ENCODE measurements at regions of chr6 and their contacts with region 1.

Region 1: DNA sequence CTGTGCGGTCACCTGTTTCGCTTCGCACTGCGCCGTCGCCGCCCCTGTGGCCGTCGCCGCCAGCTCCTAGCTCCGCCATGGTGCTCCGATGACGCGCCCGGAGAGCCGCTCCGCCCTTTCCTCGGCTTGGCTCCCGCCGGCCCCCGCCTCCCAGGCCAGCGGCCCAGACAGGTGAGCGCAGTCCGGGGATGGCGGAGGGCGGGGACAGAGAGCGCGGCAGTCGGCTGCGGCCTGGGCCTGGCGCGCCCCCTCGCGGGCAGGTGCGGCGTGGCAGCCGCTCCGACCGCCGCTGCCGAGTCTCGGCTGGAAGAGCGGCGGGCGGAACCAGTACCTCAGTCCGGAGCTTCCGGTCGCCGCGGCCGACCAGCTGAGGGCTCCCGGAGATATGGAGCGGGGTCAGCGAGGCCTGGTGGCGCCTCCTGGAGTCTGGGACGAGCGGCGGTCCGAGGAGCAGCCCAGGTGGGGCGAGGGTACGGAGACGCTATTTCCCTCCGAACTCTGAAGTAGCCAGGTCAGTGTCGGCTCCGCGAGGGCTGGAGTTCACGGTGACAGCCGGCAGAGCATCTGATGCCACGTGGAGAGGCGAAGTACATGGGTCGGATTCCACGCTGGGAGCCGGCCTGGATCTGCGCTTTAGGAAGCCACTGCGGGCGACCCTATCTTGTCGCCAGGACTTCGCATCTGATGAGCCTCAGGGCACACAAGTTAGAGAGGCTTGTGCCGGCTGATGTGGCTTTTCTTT is at the start of gene MAP7:
- DNase-seq: peak; percentile 93
- H3K4me3 ChIP-seq: peak within 1 kb of the TSS; percentile 62 to 98 (median 84)
- H3K27ac ChIP-seq: peak within 1 kb of the TSS; percentile 84
- H3K4me1 ChIP-seq: peaks cover 6% of the 10 kb centered on the region
- H3K27me3 ChIP-seq: no peaks in the 10 kb centered on the region
- CTCF ChIP-seq: peak; percentile 58 to 61
- total RNA-seq, gene MAP7: 38.2 to 39.0 TPM

Region 2: GRCh38 chr6:135535989-135536414 is 1014.5 kb before region 1 on chr6:
- CTCF ChIA-PET with region 1: no interaction called
- dilution Hi-C with region 1: no loop called
- in situ Hi-C with region 1: no loop called
- intact Hi-C with region 1: loop called (anchors 5 kb)
- DNase-seq: peak; percentile 67
- H3K4me3 ChIP-seq: no peak overlapping the region
- H3K27ac ChIP-seq: no peak overlapping the region
- H3K4me1 ChIP-seq: peaks cover 14% of the 10 kb centered on the region
- H3K27me3 ChIP-seq: peaks cover 8% of the 10 kb centered on the region
- CTCF ChIP-seq: peak; percentile 60 to 71

Region 3: GRCh38 chr6:136289579-136290409 is 260.7 kb before region 1 on chr6 and contains the start of gene BCLAF1:
- CTCF ChIA-PET with region 1: interaction called, 8 read pairs
- dilution Hi-C with region 1: no loop called
- in situ Hi-C with region 1: no loop called
- intact Hi-C with region 1: loop called (anchors 1 kb)
- DNase-seq: peak; percentile 98
- H3K4me3 ChIP-seq: peak within 1 kb of the TSS; percentile 87 to 97 (median 95)
- H3K27ac ChIP-seq: peak within 1 kb of the TSS; percentile 100
- H3K4me1 ChIP-seq: peaks cover 17% of the 10 kb centered on the region
- H3K27me3 ChIP-seq: no peaks in the 10 kb centered on the region
- CTCF ChIP-seq: no peak
- total RNA-seq, gene BCLAF1: 104 to 143 TPM

Region 4: GRCh38 chr6:136378886-136379285 is 171.6 kb before region 1 on chr6:
- CTCF ChIA-PET with region 1: interaction called, 3 read pairs
- dilution Hi-C with region 1: no loop called
- in situ Hi-C with region 1: loop called (anchors 25 kb)
- intact Hi-C with region 1: loop called (anchors 1 kb)
- DNase-seq: no peak
- H3K4me3 ChIP-seq: no peak overlapping the region
- H3K27ac ChIP-seq: no peak overlapping the region
- H3K4me1 ChIP-seq: no peaks in the 10 kb centered on the region
- H3K27me3 ChIP-seq: no peaks in the 10 kb centered on the region
- CTCF ChIP-seq: peak; percentile 12 to 52

Region 5: GRCh38 chr6:136526196-136526930 is 24.1 kb before region 1 on chr6:
- CTCF ChIA-PET with region 1: interaction called, 13 read pairs
- dilution Hi-C with region 1: no loop called
- in situ Hi-C with region 1: no loop called
- intact Hi-C with region 1: no loop called
- DNase-seq: peak; percentile 64
- H3K4me3 ChIP-seq: no peak overlapping the region
- H3K27ac ChIP-seq: no peak overlapping the region
- H3K4me1 ChIP-seq: peaks cover 12% of the 10 kb centered on the region
- H3K27me3 ChIP-seq: no peaks in the 10 kb centered on the region
- CTCF ChIP-seq: peak; percentile 13 to 43

Region 6: DNA sequence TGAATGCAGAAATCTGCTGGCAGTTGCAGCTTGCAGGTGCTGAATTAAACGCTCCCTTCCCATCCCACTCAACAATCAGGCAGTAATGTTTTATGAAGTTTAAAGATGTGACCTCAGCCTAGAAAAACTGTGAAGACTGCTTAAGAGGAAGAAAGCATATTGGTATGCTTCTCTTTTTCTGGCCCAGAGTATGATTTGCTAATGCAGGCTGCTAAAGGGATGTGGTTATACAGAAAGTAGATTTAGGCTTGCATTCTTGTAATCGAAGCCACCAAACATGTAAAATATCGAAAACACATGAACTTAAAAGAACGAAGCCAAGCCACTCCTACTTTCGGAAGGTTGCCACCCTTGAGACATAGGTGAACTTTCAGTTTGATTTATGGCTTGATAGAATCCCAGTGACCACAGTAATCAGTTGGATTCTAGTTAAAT is 201.0 kb after region 1 on chr6:
- CTCF ChIA-PET with region 1: no interaction called
- dilution Hi-C with region 1: no loop called
- in situ Hi-C with region 1: no loop called
- intact Hi-C with region 1: no loop called
- DNase-seq: no peak
- H3K4me3 ChIP-seq: no peak overlapping the region
- H3K27ac ChIP-seq: no peak overlapping the region
- H3K4me1 ChIP-seq: no peaks in the 10 kb centered on the region
- H3K27me3 ChIP-seq: no peaks in the 10 kb centered on the region
- CTCF ChIP-seq: no peak

Measured in mammary epithelial cell (primary cell).